ENCODE measurements at regions of chr17 and their contacts with region 1.

Region 1: GRCh38 chr17:50731575-50732460 is 12.4 kb downstream of the LUC7L3 start:
- DNase-seq: no peak
- ATAC-seq: no peak
- H3K4me3 Mint-ChIP-seq: no peak overlapping the region
- H3K27ac Mint-ChIP-seq: no peak overlapping the region
- H3K4me1 Mint-ChIP-seq: peaks cover 59% of the 10 kb centered on the region
- H3K27me3 Mint-ChIP-seq: no peaks in the 10 kb centered on the region
- CTCF ChIP-seq: no peak

Region 2: DNA sequence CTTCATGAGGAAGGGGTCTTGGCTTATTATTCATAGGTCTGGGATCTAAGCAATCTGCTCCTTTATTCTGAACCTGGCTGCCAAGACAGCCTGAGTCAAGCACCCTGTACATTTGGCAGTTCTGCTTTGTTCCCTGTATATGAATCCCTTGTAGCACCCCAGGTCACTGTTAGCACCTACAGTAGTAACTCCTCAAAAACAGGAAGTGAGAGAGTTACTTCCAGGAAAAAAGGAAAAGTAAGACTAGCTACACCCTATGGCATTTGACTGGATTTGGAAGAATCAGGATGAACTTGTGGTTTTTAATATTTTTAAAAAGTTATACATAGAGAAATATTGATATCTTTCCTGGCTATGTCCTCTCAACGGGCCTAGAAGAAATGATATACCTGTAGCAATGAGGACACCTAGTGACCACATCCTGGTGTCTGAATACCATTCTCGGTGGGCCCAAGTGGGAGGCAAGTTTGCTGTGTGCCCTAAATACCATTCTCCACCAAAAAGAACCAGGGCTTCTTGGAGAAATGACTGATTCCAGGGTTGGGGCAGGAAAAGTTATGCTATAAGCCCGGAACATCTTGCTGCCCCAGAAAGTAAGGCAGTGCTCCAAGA is 34.0 kb before region 1 on chr17:
- CTCF ChIA-PET with region 1: no interaction called
- POLR2A ChIA-PET with region 1: interaction called, 19 read pairs
- intact Hi-C with region 1: no loop called
- DNase-seq: no peak
- ATAC-seq: no peak
- H3K4me3 Mint-ChIP-seq: no peak overlapping the region
- H3K27ac Mint-ChIP-seq: no peak overlapping the region
- H3K4me1 Mint-ChIP-seq: peaks cover 1% of the 10 kb centered on the region
- H3K27me3 Mint-ChIP-seq: no peaks in the 10 kb centered on the region
- CTCF ChIP-seq: no peak

Region 3: DNA sequence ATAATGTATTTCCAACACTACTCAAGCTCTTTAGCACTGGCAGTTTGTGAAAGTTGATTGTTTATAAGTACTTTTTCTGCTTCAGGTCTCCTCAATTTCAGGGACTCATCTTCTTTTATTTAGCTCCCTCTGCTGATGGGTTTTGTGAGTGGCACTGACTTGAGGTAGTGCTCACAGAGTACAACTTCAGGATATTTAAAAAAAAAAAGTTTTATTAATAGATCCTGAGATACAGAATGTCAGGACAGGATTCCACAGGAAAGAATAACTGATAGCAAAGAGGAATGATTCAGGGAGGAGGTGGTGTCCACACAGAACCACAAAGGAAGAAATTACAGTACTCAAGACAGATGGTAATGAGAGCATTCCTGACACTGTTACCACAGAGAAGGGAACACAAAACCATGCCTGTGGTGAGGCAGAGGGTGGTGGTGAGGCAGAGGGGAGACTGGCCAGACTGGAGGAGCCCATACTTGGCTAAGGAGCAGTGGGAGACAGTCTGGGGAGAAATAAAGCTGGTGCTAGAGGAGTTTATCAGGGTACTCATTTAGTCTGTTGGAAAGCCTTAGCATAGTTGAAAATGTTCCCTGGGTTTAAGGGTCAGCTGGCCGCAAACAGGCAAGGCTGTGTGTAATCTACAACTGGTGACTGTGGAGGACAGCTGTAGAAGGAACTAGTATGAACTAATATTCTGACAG is 325.1 kb after region 1 on chr17:
- CTCF ChIA-PET with region 1: no interaction called
- POLR2A ChIA-PET with region 1: no interaction called
- intact Hi-C with region 1: no loop called
- DNase-seq: no peak
- ATAC-seq: peak; percentile 71
- H3K4me3 Mint-ChIP-seq: no peak overlapping the region
- H3K27ac Mint-ChIP-seq: no peak overlapping the region
- H3K4me1 Mint-ChIP-seq: peaks cover 20% of the 10 kb centered on the region
- H3K27me3 Mint-ChIP-seq: no peaks in the 10 kb centered on the region
- CTCF ChIP-seq: peak; percentile 63

Measured in activated B cell treated with CpG ODN at 0.5 μM for 24 hours (primary cell).